GM13977 (cell line): ENCODE measurements at regions of chr2 and their contacts with region 1.

Region 1: GRCh38 chr2:32553829-32554432 is 73.9 kb upstream of the TTC27 start:
- DNase-seq: peak; percentile 61
- CTCF ChIP-seq: peak; percentile 69

Region 2: DNA sequence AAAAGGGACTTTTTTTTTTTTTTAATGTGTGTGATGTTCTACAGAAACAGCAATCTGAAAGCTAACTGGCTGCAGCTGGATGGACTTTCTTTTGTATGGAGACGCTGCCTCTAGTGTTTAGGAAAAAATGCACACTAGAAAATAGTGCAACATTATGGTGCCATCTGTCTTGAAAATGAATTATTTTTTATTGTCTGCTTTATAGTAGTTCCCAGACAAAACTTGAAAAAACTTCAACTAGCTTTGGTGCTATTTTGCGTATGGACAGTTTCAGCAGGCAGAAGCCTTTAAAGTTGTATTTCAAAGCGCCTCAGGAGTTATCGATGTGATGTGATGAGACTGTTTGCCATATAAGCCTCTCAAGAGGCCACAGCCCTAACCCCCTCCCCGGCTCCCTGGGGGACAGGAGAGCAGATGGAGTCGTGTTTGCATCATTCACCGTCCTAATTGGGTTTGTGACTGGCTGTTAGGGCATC is 479.7 kb after region 1 on chr2:
- in situ Hi-C with region 1: loop called (anchors 25 kb)
- DNase-seq: peak; percentile 9
- CTCF ChIP-seq: peak; percentile 21

Region 3: GRCh38 chr2:33395655-33396249 is 841.8 kb after region 1 on chr2:
- in situ Hi-C with region 1: loop called (anchors 25 kb)
- DNase-seq: peak; percentile 37
- CTCF ChIP-seq: peak; percentile 62